ENCODE measurements at regions of chr2 and their contacts with region 1.

Region 1: DNA sequence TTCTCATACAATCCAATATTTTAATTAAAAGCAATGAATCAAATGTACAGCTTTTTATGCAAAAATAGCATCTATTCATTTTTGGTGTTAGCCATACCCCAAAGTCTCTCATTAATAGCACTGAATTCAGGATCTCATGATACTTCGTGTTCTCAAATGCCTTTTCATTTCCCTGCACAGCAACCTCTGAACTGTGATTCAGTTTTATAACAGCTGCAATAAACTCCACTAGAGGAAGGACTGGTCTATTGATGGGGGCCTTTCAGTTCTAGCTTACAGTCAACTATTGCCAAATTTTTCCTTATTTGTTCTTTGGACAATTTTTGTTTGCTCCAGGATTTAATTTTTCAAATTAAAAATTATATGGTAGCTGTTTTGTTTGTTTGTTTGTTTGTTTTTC is 4.8 kb upstream of the TMEM87B start:
- DNase-seq: no peak
- H3K4me3 ChIP-seq: no peak overlapping the region
- H3K4me3 Mint-ChIP-seq: no peak overlapping the region
- H3K27ac ChIP-seq: no peak overlapping the region
- H3K27ac Mint-ChIP-seq: no peak overlapping the region
- H3K4me1 ChIP-seq: peaks cover 7% of the 10 kb centered on the region
- H3K4me1 Mint-ChIP-seq: peaks cover 8 to 11% (median 11%) of the 10 kb centered on the region in 3 donors
- H3K27me3 ChIP-seq: no peaks in the 10 kb centered on the region
- H3K27me3 Mint-ChIP-seq: peaks cover 2 to 5% of the 10 kb centered on the region in 2 donors

Region 2: GRCh38 chr2:111887819-111888223 is 162.5 kb before region 1 on chr2:
- CTCF ChIA-PET with region 1: interaction called, 17 read pairs
- POLR2A ChIA-PET with region 1: interaction called, 5 read pairs
- DNase-seq: peak in 4 of 5 donors; percentile 20 to 67 (median 34)
- H3K4me3 ChIP-seq: no peak overlapping the region
- H3K4me3 Mint-ChIP-seq: peak overlapping the region in 2 of 7 donors; percentile 4 to 70
- H3K27ac ChIP-seq: no peak overlapping the region
- H3K27ac Mint-ChIP-seq: no peak overlapping the region
- H3K4me1 ChIP-seq: peaks cover 6% of the 10 kb centered on the region
- H3K4me1 Mint-ChIP-seq: peaks cover 7 to 10% (median 9%) of the 10 kb centered on the region in 3 donors
- H3K27me3 ChIP-seq: no peaks in the 10 kb centered on the region
- H3K27me3 Mint-ChIP-seq: peaks cover 0 to under 1% of the 10 kb centered on the region in 2 donors

Measured in CD8-positive, alpha-beta memory T cell (primary cell).